CD4-positive, alpha-beta memory T cell (primary cell): ENCODE measurements at regions of chr5 and their contacts with region 1.

Region 1: DNA sequence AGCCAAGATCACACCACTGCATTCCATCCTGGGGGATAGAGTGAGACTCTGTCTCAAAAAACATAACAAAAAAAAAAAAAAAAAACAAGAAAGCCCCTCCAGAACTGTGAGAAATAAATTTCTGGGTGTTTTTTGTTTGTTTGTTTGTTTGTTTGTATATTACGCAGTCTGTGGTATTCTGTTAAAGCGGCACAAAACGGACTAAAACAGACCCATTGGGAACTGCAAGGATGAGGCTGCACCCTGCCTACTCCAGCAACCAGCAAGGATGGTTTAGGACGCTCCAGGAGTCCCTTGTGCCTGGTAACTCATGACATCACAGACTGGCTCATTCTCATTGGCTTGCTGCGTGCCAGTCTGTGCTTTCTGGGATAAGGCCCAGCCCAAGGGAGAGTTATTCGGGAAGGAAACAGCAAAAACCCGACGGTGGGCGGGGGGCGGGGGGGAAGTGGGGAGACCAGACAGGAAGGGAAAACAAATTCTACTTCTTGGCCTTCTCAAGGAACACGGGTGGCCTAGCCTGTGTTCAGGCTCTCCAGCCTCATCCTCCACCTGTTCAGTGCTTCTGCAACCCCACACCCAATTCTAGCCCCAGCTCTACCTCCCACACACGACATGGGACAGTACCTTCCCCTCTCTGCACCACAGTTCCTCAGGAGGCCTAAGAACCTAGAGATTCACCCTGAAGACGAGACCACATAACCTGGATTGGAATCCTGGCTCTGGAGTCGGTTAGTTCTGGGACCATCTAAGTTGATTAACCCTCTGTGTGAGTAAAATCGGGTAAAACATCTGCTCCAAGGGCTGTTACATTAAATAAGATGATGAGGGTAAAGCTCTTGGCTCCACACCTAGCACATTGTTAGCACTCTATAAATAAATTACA is 2.8 kb downstream of the CD74 start:
- DNase-seq: peak in 4 of 5 donors; percentile 34 to 54 (median 48)
- H3K4me3 ChIP-seq: peak overlapping the region; percentile 34 to 78
- H3K4me3 Mint-ChIP-seq: peak overlapping the region; percentile 97 to 100 (median 99)
- H3K27ac ChIP-seq: peak overlapping the region; percentile 98
- H3K27ac Mint-ChIP-seq: peak overlapping the region; percentile 99 to 100 (median 99)
- H3K4me1 ChIP-seq: peaks cover 50% of the 10 kb centered on the region
- H3K4me1 Mint-ChIP-seq: peaks cover 26 to 57% (median 38%) of the 10 kb centered on the region in 4 donors
- H3K27me3 ChIP-seq: no peaks in the 10 kb centered on the region
- H3K27me3 Mint-ChIP-seq: no peaks in the 10 kb centered on the region

Region 2: GRCh38 chr5:148972958-148973357 is 1436.9 kb before region 1 on chr5:
- CTCF ChIA-PET with region 1: no interaction called
- POLR2A ChIA-PET with region 1: no interaction called
- intact Hi-C with region 1: no loop called
- DNase-seq: no peak
- H3K4me3 ChIP-seq: no peak overlapping the region
- H3K4me3 Mint-ChIP-seq: no peak overlapping the region
- H3K27ac ChIP-seq: no peak overlapping the region
- H3K27ac Mint-ChIP-seq: no peak overlapping the region
- H3K4me1 ChIP-seq: no peaks in the 10 kb centered on the region
- H3K4me1 Mint-ChIP-seq: no peaks in the 10 kb centered on the region
- H3K27me3 ChIP-seq: no peaks in the 10 kb centered on the region
- H3K27me3 Mint-ChIP-seq: peaks cover 1 to 8% of the 10 kb centered on the region in 2 donors

Region 3: DNA sequence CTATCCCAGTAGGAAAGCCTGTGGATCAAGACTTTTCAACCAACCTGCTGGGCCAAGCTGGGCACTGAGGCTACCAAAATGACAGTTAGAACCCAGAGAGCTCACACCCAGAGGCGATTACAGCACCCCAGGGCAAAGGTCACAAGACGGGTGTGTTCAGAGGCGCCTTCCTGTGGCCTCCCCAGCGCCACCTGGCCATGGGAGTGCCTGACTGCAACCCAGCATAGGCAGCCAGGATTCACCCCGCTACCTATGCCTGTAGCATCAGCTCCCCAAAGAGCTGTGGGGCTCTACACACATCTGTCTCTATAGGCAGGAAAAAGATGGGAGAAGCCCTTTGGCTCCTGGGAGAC is 287.7 kb before region 1 on chr5:
- CTCF ChIA-PET with region 1: no interaction called
- POLR2A ChIA-PET with region 1: no interaction called
- intact Hi-C with region 1: no loop called
- DNase-seq: no peak
- H3K4me3 ChIP-seq: no peak overlapping the region
- H3K4me3 Mint-ChIP-seq: no peak overlapping the region
- H3K27ac ChIP-seq: no peak overlapping the region
- H3K27ac Mint-ChIP-seq: no peak overlapping the region
- H3K4me1 ChIP-seq: no peaks in the 10 kb centered on the region
- H3K4me1 Mint-ChIP-seq: no peaks in the 10 kb centered on the region
- H3K27me3 ChIP-seq: no peaks in the 10 kb centered on the region
- H3K27me3 Mint-ChIP-seq: peaks cover 0 to under 1% of the 10 kb centered on the region in 2 donors

Region 4: DNA sequence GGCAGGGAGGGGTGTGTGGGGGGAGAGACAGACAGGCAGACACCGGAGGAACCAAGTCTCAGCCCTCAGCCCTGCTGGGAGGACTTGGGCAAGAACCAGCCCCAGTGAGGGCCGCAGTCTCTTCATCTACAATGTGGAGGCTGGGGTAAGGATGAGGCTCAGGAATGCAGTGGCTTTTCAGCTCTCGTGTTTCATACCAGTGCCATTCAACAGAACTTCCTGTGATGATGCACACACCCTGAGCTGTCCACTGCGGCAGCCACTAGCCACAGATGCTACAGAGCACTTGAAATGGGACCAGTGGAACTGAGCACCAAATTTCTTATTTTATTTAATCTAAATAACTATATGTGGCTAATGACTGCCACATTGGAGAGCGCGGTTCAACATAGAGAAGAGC is 131.0 kb before region 1 on chr5:
- CTCF ChIA-PET with region 1: no interaction called
- POLR2A ChIA-PET with region 1: no interaction called
- intact Hi-C with region 1: no loop called
- DNase-seq: no peak
- H3K4me3 ChIP-seq: no peak overlapping the region
- H3K4me3 Mint-ChIP-seq: no peak overlapping the region
- H3K27ac ChIP-seq: no peak overlapping the region
- H3K27ac Mint-ChIP-seq: no peak overlapping the region
- H3K4me1 ChIP-seq: no peaks in the 10 kb centered on the region
- H3K4me1 Mint-ChIP-seq: peaks cover 0 to 2% (median 0%) of the 10 kb centered on the region in 4 donors
- H3K27me3 ChIP-seq: no peaks in the 10 kb centered on the region
- H3K27me3 Mint-ChIP-seq: peaks cover 4 to 6% of the 10 kb centered on the region in 2 donors

Region 5: GRCh38 chr5:150398722-150399523 is 11.0 kb before region 1 on chr5:
- CTCF ChIA-PET with region 1: interaction called, 25 read pairs
- POLR2A ChIA-PET with region 1: interaction called, 44 read pairs
- intact Hi-C with region 1: no loop called
- DNase-seq: no peak
- H3K4me3 ChIP-seq: no peak overlapping the region
- H3K4me3 Mint-ChIP-seq: no peak overlapping the region
- H3K27ac ChIP-seq: no peak overlapping the region
- H3K27ac Mint-ChIP-seq: peak overlapping the region in 6 of 7 donors; percentile 22 to 86 (median 76)
- H3K4me1 ChIP-seq: no peaks in the 10 kb centered on the region
- H3K4me1 Mint-ChIP-seq: peaks cover 0 to 8% (median 0%) of the 10 kb centered on the region in 4 donors
- H3K27me3 ChIP-seq: no peaks in the 10 kb centered on the region
- H3K27me3 Mint-ChIP-seq: no peaks in the 10 kb centered on the region

Region 6: GRCh38 chr5:150449517-150450339 is 39.8 kb after region 1 on chr5 and contains the start of gene RPS14:
- CTCF ChIA-PET with region 1: interaction called, 31 read pairs
- POLR2A ChIA-PET with region 1: interaction called, 86 read pairs
- intact Hi-C with region 1: loop called (anchors 1 kb)
- DNase-seq: peak; percentile 96 to 98 (median 97)
- H3K4me3 ChIP-seq: peak within 1 kb of the TSS; percentile 87 to 99
- H3K4me3 Mint-ChIP-seq: peak within 1 kb of the TSS; percentile 92 to 100 (median 98)
- H3K27ac ChIP-seq: peak within 1 kb of the TSS; percentile 99
- H3K27ac Mint-ChIP-seq: peak within 1 kb of the TSS; percentile 99 to 100 (median 100)
- H3K4me1 ChIP-seq: peaks cover 28% of the 10 kb centered on the region
- H3K4me1 Mint-ChIP-seq: peaks cover 15 to 46% (median 36%) of the 10 kb centered on the region in 4 donors
- H3K27me3 ChIP-seq: no peaks in the 10 kb centered on the region
- H3K27me3 Mint-ChIP-seq: no peaks in the 10 kb centered on the region
- total RNA-seq, gene RPS14: 5,260 to 5,575 TPM